Activated CD8-positive, alpha-beta T cell treated with anti-CD3 and anti-CD28 coated beads, Interleukin-2, amount 10 ng/mL, durations not matched to agents 7 days and 5 days (primary cell): ENCODE measurements at regions of chr15 and their contacts with region 1.

Region 1: DNA sequence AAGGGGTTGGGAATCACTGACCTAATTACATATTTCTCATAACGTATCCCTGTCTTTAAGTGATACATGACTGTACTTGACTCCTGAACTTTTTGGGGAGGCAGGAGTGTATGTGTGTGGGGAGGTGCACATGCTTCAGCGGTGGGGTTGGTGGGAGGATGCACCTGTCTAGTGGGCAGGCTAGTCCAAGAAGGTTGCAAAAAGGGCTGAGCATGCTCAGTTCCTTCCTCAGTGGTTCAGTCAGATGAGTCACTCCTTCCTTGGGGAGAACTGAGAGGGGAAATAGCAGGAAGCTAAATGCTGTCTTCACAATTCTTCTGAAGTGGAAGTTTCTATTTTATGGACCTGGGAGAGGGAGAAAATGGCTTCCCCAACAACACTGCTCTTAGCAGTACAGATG is 24.6 kb upstream of the AP4E1 start:
- DNase-seq: peak; percentile 65
- ATAC-seq: peak; percentile 45
- H3K4me3 Mint-ChIP-seq: peak overlapping the region; percentile 40
- H3K27ac Mint-ChIP-seq: peak overlapping the region; percentile 85
- H3K4me1 Mint-ChIP-seq: peaks cover 63% of the 10 kb centered on the region
- H3K27me3 Mint-ChIP-seq: no peaks in the 10 kb centered on the region

Region 2: DNA sequence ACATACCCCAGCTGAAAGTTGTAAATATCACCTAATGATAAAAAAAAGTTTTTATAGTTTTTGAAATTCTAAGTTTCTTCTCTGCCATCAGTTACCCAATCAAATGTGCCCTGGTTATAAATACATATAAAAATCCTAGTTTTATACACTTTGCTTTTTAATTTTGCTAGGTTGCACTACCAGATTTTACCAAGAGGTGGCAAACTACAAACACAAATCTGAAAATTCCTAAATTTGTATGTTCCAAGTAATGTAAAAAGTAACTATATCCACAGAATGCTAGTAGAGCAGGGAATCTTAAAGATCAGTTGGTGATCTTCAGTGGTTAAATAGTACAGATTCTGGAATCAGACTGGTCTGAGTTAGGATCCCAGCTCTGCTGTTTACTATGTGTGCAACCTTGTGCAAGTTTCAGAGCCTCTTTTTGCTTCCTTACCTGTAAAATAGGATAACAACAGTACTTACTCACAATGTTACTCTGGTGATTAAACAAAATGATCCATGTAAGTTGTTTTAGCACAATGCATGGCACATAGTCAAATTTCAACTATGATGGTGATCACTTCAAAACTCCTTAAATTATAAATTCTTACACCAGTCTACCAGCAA is 208.3 kb before region 1 on chr15:
- CTCF ChIA-PET with region 1: interaction called, 12 read pairs
- POLR2A ChIA-PET with region 1: no interaction called
- DNase-seq: no peak
- ATAC-seq: no peak
- H3K4me3 Mint-ChIP-seq: no peak overlapping the region
- H3K27ac Mint-ChIP-seq: no peak overlapping the region
- H3K4me1 Mint-ChIP-seq: peaks cover 12% of the 10 kb centered on the region
- H3K27me3 Mint-ChIP-seq: no peaks in the 10 kb centered on the region

Region 3: GRCh38 chr15:50916400-50916799 is 32.5 kb after region 1 on chr15:
- CTCF ChIA-PET with region 1: no interaction called
- POLR2A ChIA-PET with region 1: no interaction called
- DNase-seq: no peak
- ATAC-seq: no peak
- H3K4me3 Mint-ChIP-seq: no peak overlapping the region
- H3K27ac Mint-ChIP-seq: no peak overlapping the region
- H3K4me1 Mint-ChIP-seq: peaks cover 2% of the 10 kb centered on the region
- H3K27me3 Mint-ChIP-seq: no peaks in the 10 kb centered on the region

Region 4: GRCh38 chr15:50945725-50946124 is 61.8 kb after region 1 on chr15:
- CTCF ChIA-PET with region 1: no interaction called
- POLR2A ChIA-PET with region 1: no interaction called
- DNase-seq: no peak
- ATAC-seq: no peak
- H3K4me3 Mint-ChIP-seq: no peak overlapping the region
- H3K27ac Mint-ChIP-seq: no peak overlapping the region
- H3K4me1 Mint-ChIP-seq: no peaks in the 10 kb centered on the region
- H3K27me3 Mint-ChIP-seq: no peaks in the 10 kb centered on the region

Region 5: DNA sequence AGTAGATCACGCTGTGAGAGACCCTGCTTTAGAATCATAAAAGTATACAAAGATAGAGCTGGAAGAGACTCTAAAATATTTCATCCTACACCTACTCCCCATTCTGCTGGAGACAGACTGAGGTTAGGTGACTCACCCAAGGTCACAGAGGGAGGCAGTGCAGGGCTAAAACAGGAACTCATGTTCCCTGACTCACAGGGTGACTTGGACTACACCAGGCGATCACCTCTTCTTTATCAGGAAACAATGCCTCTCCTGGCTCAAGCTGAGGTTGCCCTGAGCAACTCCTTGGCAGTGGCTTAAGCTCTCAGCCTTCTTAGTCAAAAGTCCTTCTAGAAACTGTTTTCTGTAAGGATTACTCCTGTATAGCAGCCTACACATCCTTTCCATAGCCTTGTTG is 237.2 kb after region 1 on chr15:
- CTCF ChIA-PET with region 1: no interaction called
- POLR2A ChIA-PET with region 1: no interaction called
- DNase-seq: no peak
- ATAC-seq: no peak
- H3K4me3 Mint-ChIP-seq: no peak overlapping the region
- H3K27ac Mint-ChIP-seq: no peak overlapping the region
- H3K4me1 Mint-ChIP-seq: no peaks in the 10 kb centered on the region
- H3K27me3 Mint-ChIP-seq: peaks cover 22% of the 10 kb centered on the region